ENCODE measurements at regions of chr9 and their contacts with region 1.

Region 1: GRCh38 chr9:122810306-122810946 is 10.5 kb downstream of the OR1K1 start:
- DNase-seq: peak; percentile 52
- H3K4me3 Mint-ChIP-seq: no peak overlapping the region
- H3K27ac Mint-ChIP-seq: no peak overlapping the region
- H3K4me1 Mint-ChIP-seq: peaks cover 30% of the 10 kb centered on the region
- H3K27me3 Mint-ChIP-seq: peaks cover 2% of the 10 kb centered on the region

Region 2: GRCh38 chr9:122051351-122052321 is 758.8 kb before region 1 on chr9:
- intact Hi-C with region 1: loop called (anchors 1 kb)
- DNase-seq: no peak
- H3K4me3 Mint-ChIP-seq: no peak overlapping the region
- H3K27ac Mint-ChIP-seq: peak overlapping the region; percentile 23
- H3K4me1 Mint-ChIP-seq: peaks cover 12% of the 10 kb centered on the region
- H3K27me3 Mint-ChIP-seq: peaks cover 21% of the 10 kb centered on the region

Region 3: GRCh38 chr9:122464633-122465567 is 345.5 kb before region 1 on chr9:
- intact Hi-C with region 1: loop called (anchors 1 kb)
- DNase-seq: peak; percentile 59
- H3K4me3 Mint-ChIP-seq: peak overlapping the region; percentile 78
- H3K27ac Mint-ChIP-seq: peak overlapping the region; percentile 72
- H3K4me1 Mint-ChIP-seq: peaks cover 14% of the 10 kb centered on the region
- H3K27me3 Mint-ChIP-seq: peaks cover 45% of the 10 kb centered on the region

Region 4: GRCh38 chr9:122846371-122846940 is 36.0 kb after region 1 on chr9:
- intact Hi-C with region 1: loop called (anchors 1 kb)
- DNase-seq: no peak
- H3K4me3 Mint-ChIP-seq: peak overlapping the region; percentile 30
- H3K27ac Mint-ChIP-seq: peak overlapping the region; percentile 86
- H3K4me1 Mint-ChIP-seq: peaks cover 26% of the 10 kb centered on the region
- H3K27me3 Mint-ChIP-seq: no peaks in the 10 kb centered on the region

Region 5: GRCh38 chr9:123338710-123339665 is 528.6 kb after region 1 on chr9:
- intact Hi-C with region 1: loop called (anchors 1 kb)
- DNase-seq: peak; percentile 59
- H3K4me3 Mint-ChIP-seq: peak overlapping the region; percentile 73
- H3K27ac Mint-ChIP-seq: peak overlapping the region; percentile 95
- H3K4me1 Mint-ChIP-seq: peaks cover 40% of the 10 kb centered on the region
- H3K27me3 Mint-ChIP-seq: no peaks in the 10 kb centered on the region